ENCODE measurements at regions of chr12 and their contacts with region 1.

Region 1: GRCh38 chr12:96578526-96579125 is 89.2 kb downstream of the CFAP54 start:
- DNase-seq: peak; percentile 37
- CTCF ChIP-seq: peak; percentile 28

Region 2: GRCh38 chr12:97148941-97149559 is 570.4 kb after region 1 on chr12:
- in situ Hi-C with region 1: loop called (anchors 25 kb)
- DNase-seq: peak; percentile 41
- CTCF ChIP-seq: peak; percentile 88

Region 3: DNA sequence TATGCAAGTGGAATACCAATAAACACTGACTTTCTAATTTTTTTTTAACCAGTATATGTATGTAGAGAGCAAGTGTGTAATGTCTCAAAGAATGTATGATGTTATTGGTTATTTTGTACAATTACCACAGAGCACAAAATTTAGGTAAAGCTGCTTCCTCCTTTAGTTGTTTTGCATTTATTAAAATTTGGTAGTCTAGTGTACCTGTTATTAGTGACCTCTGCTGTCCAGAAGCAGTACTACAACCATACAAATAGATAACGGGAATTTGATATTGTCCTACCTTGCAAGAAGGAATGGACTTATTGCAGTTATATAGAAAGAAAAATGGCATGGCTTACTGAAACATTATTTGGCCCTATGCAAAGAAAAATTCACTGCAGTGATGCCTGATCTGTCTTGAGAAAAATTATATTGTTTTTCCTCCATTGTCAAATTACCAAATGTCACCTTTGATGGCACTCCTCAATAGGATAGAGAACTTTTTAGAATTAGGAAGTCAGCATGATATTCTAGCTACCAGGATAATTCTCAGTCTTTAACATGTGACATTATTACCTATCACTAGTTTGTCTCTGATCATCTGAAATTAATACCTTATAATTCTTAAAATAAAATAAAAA is 730.1 kb after region 1 on chr12:
- in situ Hi-C with region 1: no loop called
- DNase-seq: no peak
- CTCF ChIP-seq: peak; percentile 48